Pancreas (tissue), 10 donors: ENCODE measurements at regions of chr3 and their contacts with region 1.

Region 1: DNA sequence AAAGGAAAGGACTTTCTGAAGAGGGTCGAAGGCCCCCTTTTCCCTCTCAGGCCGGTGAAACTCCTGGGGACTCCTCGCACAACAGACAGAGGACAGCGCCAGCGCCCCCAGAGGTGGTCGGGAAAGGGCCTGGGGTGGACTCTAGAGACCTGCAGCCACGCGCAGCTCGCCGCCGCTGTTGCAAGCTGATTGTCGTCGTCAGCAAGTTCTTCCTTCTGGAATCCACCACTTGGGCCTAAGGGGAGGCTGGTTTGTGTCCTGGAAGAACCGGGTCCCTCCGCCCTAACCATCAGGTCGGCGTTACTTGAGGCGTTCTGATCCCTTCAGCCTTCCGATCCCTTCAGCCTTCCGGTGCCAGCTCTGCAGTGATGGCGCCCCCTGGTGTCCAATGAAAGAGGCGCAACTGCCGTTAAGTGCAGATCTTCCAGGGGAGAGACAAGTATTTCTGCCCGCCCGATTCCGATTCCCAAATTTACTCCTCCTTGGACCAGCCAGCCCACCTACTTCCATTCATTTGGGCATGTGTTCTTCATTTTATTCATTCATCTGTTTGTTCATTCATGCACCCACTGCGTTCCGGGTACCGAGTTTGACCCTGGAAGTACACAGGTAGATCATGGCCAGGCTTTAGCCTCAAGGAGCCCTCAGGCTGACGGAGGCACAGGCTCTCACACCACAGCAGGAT is 77.2 kb upstream of the SLC6A11 start:
- DNase-seq: peak; percentile 33 to 91 (median 74)
- ATAC-seq: peak; percentile 68 to 94 (median 90)
- H3K4me3 ChIP-seq: peak overlapping the region in 2 of 4 donors; percentile 28 to 34
- H3K27ac ChIP-seq: no peak overlapping the region
- H3K4me1 ChIP-seq: no peaks in the 10 kb centered on the region
- H3K27me3 ChIP-seq: peaks cover 0 to 5% (median 2%) of the 10 kb centered on the region in 4 donors
- CTCF ChIP-seq: peak; percentile 73 to 93 (median 86)

Region 2: GRCh38 chr3:10341901-10342398 is 396.9 kb before region 1 on chr3:
- intact Hi-C with region 1: loop called in 2 of 3 experiments (anchors 2 to 5 kb)
- DNase-seq: no peak
- ATAC-seq: no peak
- H3K4me3 ChIP-seq: no peak overlapping the region
- H3K27ac ChIP-seq: no peak overlapping the region
- H3K4me1 ChIP-seq: no peaks in the 10 kb centered on the region
- H3K27me3 ChIP-seq: no peaks in the 10 kb centered on the region
- CTCF ChIP-seq: no peak

Region 3: GRCh38 chr3:11085093-11085840 is 346.4 kb after region 1 on chr3:
- intact Hi-C with region 1: no loop called
- DNase-seq: no peak
- ATAC-seq: peak in 1 of 4 donors; percentile 18
- H3K4me3 ChIP-seq: no peak overlapping the region
- H3K27ac ChIP-seq: no peak overlapping the region
- H3K4me1 ChIP-seq: no peaks in the 10 kb centered on the region
- H3K27me3 ChIP-seq: no peaks in the 10 kb centered on the region
- CTCF ChIP-seq: no peak